ENCODE measurements at regions of chr1 and their contacts with region 1.

Region 1: GRCh38 chr1:109643385-109644230 is 12.3 kb upstream of the GSTM4 start:
- DNase-seq: peak; percentile 94
- ATAC-seq: peak; percentile 95
- H3K4me3 Mint-ChIP-seq: no peak overlapping the region
- H3K27ac Mint-ChIP-seq: no peak overlapping the region
- H3K4me1 Mint-ChIP-seq: peaks cover 7% of the 10 kb centered on the region
- H3K27me3 Mint-ChIP-seq: peaks cover 1% of the 10 kb centered on the region
- CTCF ChIP-seq: peak; percentile 88

Region 2: GRCh38 chr1:109548321-109549267 is 95.0 kb before region 1 on chr1 and contains the start of gene GNAI3:
- CTCF ChIA-PET with region 1: interaction called, 294 read pairs
- POLR2A ChIA-PET with region 1: interaction called, 3 read pairs
- intact Hi-C with region 1: loop called (anchors 5 kb)
- DNase-seq: peak; percentile 98
- ATAC-seq: peak; percentile 95
- H3K4me3 Mint-ChIP-seq: peak within 1 kb of the TSS; percentile 98
- H3K27ac Mint-ChIP-seq: peak within 1 kb of the TSS; percentile 96
- H3K4me1 Mint-ChIP-seq: peaks cover 40% of the 10 kb centered on the region
- H3K27me3 Mint-ChIP-seq: no peaks in the 10 kb centered on the region
- CTCF ChIP-seq: no peak
- total RNA-seq, gene GNAI3: 7.5 to 7.7 TPM

Region 3: DNA sequence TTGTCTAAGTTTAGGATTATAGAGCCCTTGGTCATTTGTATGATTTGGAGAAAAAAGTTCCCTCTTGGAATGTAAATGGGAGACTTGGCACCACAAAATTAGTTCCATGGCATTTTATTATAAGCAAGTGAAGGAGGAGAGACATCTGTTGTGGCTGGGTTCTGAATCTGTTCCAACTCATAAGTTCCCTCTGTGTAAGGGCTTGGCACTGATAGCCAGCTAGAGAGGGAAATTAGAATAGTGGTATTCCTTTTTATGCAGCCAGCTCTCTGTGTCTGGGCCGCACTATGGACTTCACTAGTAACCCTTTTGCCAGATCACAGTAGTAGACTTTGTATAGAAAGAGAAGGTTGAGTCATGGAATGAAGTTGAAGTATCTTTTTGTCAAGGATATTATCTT is 64.1 kb before region 1 on chr1:
- CTCF ChIA-PET with region 1: interaction called, 11 read pairs
- POLR2A ChIA-PET with region 1: no interaction called
- intact Hi-C with region 1: no loop called
- DNase-seq: no peak
- ATAC-seq: no peak
- H3K4me3 Mint-ChIP-seq: no peak overlapping the region
- H3K27ac Mint-ChIP-seq: no peak overlapping the region
- H3K4me1 Mint-ChIP-seq: no peaks in the 10 kb centered on the region
- H3K27me3 Mint-ChIP-seq: no peaks in the 10 kb centered on the region
- CTCF ChIP-seq: no peak

Region 4: DNA sequence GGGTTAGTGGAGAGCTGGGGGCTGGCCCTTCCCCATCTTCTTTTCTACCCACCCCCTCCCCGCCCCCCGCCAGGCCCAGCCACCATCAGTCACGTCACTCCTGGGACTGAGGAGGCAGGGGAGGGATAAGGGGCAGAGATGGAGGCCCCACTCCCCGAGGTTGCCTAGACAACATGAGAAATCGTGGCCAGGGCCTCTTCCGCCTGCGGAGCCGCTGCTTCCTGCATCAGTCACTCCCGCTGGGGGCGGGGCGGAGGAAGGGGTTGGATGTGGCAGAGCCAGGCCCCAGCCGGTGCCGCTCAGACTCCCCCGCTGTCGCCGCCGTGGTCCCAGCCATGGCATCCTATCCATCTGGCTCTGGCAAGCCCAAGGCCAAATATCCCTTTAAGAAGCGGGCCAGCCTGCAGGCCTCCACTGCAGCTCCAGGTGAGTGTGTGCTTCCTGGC is 22.7 kb before region 1 on chr1:
- CTCF ChIA-PET with region 1: interaction called, 71 read pairs
- POLR2A ChIA-PET with region 1: interaction called, 5 read pairs
- intact Hi-C with region 1: no loop called
- DNase-seq: peak; percentile 99
- ATAC-seq: peak; percentile 87
- H3K4me3 Mint-ChIP-seq: peak overlapping the region; percentile 88
- H3K27ac Mint-ChIP-seq: peak overlapping the region; percentile 93
- H3K4me1 Mint-ChIP-seq: peaks cover 58% of the 10 kb centered on the region
- H3K27me3 Mint-ChIP-seq: no peaks in the 10 kb centered on the region
- CTCF ChIP-seq: no peak

Region 5: DNA sequence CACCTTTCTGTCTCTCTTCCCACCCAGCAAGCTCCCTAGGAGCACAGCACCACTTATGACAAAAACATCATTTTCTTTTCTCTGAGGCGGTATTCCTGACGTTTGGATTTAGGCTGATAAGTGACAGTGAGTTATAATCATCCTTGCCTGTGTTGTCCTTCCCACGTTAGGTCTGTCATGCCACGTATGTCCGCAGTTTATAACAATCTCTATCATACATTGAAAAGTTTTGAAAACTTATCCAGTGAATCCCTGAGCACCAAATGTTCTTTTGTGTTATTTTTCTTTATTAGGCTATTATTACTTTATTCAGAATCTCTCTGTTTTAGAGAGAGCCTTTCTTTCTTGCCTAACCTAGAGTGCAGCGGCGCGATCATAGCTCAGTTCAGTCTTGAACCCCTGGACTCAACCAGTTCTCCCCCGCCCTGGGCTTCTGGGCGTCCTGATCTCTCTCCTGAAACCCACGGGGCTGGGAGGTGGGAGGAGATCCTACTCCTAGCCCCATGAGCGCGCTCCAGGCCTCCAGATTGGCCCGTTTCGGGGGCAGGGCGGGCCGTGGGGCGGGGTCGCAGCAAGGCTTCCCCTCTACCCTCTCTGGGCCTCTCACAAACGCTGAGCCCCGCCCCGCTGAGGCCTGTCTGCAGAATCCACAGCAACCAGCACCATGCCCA is 24.0 kb after region 1 on chr1 and contains the start of gene GSTM2:
- CTCF ChIA-PET with region 1: interaction called, 16 read pairs
- POLR2A ChIA-PET with region 1: interaction called, 4 read pairs
- intact Hi-C with region 1: no loop called
- DNase-seq: peak; percentile 91
- ATAC-seq: peak; percentile 99
- H3K4me3 Mint-ChIP-seq: peak within 1 kb of the TSS; percentile 72
- H3K27ac Mint-ChIP-seq: peak within 1 kb of the TSS; percentile 47
- H3K4me1 Mint-ChIP-seq: peaks cover 21% of the 10 kb centered on the region
- H3K27me3 Mint-ChIP-seq: no peaks in the 10 kb centered on the region
- CTCF ChIP-seq: no peak
- total RNA-seq, gene GSTM2: 13.6 to 16.2 TPM

Region 6: GRCh38 chr1:109739738-109740660 is 96.4 kb after region 1 on chr1:
- CTCF ChIA-PET with region 1: interaction called, 15 read pairs
- POLR2A ChIA-PET with region 1: no interaction called
- intact Hi-C with region 1: no loop called
- DNase-seq: peak; percentile 90
- ATAC-seq: peak; percentile 99
- H3K4me3 Mint-ChIP-seq: peak overlapping the region; percentile 83
- H3K27ac Mint-ChIP-seq: peak overlapping the region; percentile 79
- H3K4me1 Mint-ChIP-seq: peaks cover 8% of the 10 kb centered on the region
- H3K27me3 Mint-ChIP-seq: no peaks in the 10 kb centered on the region
- CTCF ChIP-seq: no peak

Region 7: GRCh38 chr1:110011527-110012041 is 368.0 kb after region 1 on chr1:
- CTCF ChIA-PET with region 1: interaction called, 10 read pairs
- POLR2A ChIA-PET with region 1: no interaction called
- intact Hi-C with region 1: no loop called
- DNase-seq: peak; percentile 40
- ATAC-seq: peak; percentile 92
- H3K4me3 Mint-ChIP-seq: no peak overlapping the region
- H3K27ac Mint-ChIP-seq: no peak overlapping the region
- H3K4me1 Mint-ChIP-seq: no peaks in the 10 kb centered on the region
- H3K27me3 Mint-ChIP-seq: no peaks in the 10 kb centered on the region
- CTCF ChIP-seq: peak; percentile 60